ENCODE measurements at regions of chr15 and their contacts with region 1.

Region 1: GRCh38 chr15:49235446-49236124 is 65.5 kb downstream of the GALK2 start:
- DNase-seq: peak; percentile 48
- ATAC-seq: peak; percentile 82
- H3K4me3 ChIP-seq: no peak overlapping the region
- H3K27ac ChIP-seq: no peak overlapping the region
- H3K4me1 ChIP-seq: no peaks in the 10 kb centered on the region
- H3K27me3 ChIP-seq: no peaks in the 10 kb centered on the region
- CTCF ChIP-seq: peak; percentile 46 to 79 (median 69); a peak in 5 of 6 replicates
- POLR2A ChIP-seq: no peak
- RAD21 ChIP-seq: peak; percentile 76

Region 2: GRCh38 chr15:49421991-49422390 is 186.4 kb after region 1 on chr15:
- CTCF ChIA-PET with region 1: interaction called, 37 read pairs
- POLR2A ChIA-PET with region 1: no interaction called
- RAD21 ChIA-PET with region 1: no interaction called
- intact Hi-C with region 1: loop called (anchors 2 kb)
- DNase-seq: peak; percentile 54
- ATAC-seq: peak; percentile 65
- H3K4me3 ChIP-seq: no peak overlapping the region
- H3K27ac ChIP-seq: no peak overlapping the region
- H3K4me1 ChIP-seq: no peaks in the 10 kb centered on the region
- H3K27me3 ChIP-seq: no peaks in the 10 kb centered on the region
- CTCF ChIP-seq: peak; percentile 68 to 77 (median 70)
- POLR2A ChIP-seq: no peak
- RAD21 ChIP-seq: peak; percentile 68

Region 3: GRCh38 chr15:49832511-49832910 is 596.9 kb after region 1 on chr15:
- CTCF ChIA-PET with region 1: interaction called, 8 read pairs
- POLR2A ChIA-PET with region 1: no interaction called
- RAD21 ChIA-PET with region 1: no interaction called
- intact Hi-C with region 1: loop called (anchors 2 kb)
- DNase-seq: no peak
- ATAC-seq: peak; percentile 94
- H3K4me3 ChIP-seq: no peak overlapping the region
- H3K27ac ChIP-seq: no peak overlapping the region
- H3K4me1 ChIP-seq: no peaks in the 10 kb centered on the region
- H3K27me3 ChIP-seq: no peaks in the 10 kb centered on the region
- CTCF ChIP-seq: peak; percentile 18 to 68 (median 64); a peak in 5 of 6 replicates
- POLR2A ChIP-seq: no peak
- RAD21 ChIP-seq: peak; percentile 55

Region 4: DNA sequence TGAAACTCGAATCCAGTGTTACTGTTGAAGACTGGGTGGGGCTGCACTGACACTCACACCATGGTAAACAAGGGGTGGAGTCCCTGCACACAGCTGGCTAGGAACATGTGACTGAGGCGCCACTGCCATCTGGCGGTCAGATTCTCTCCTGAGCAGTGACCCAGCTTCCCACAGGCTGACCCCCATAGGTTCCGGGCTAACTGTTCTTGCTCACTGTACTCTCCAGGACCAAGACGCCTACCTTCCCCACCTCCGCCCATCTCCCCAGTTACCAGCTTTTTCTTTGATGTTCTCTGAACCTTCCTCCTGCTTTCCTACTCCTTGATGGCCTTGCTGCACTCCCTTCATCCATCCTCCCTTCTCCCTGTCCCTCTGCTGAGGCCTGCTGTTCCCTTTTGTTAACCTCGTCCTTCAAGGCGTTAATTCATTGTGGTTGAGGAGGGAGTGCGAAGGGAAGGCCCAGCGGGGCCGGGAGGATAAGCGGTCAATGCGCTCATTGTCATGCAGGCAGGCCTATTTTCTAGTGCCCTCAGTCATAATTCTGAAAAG is 768.3 kb after region 1 on chr15:
- CTCF ChIA-PET with region 1: interaction called, 19 read pairs
- POLR2A ChIA-PET with region 1: no interaction called
- RAD21 ChIA-PET with region 1: interaction called in 1 of 2 experiments, 3 read pairs
- intact Hi-C with region 1: loop called (anchors 1 kb)
- DNase-seq: peak; percentile 80
- ATAC-seq: peak; percentile 100
- H3K4me3 ChIP-seq: no peak overlapping the region
- H3K27ac ChIP-seq: no peak overlapping the region
- H3K4me1 ChIP-seq: peaks cover 2 to 5% of the 10 kb centered on the region in 2 experiments; a peak in 3 of 4 replicates
- H3K27me3 ChIP-seq: no peaks in the 10 kb centered on the region
- CTCF ChIP-seq: peak; percentile 38 to 89 (median 84); a peak in 5 of 6 replicates
- POLR2A ChIP-seq: no peak
- RAD21 ChIP-seq: peak; percentile 77

Region 5: GRCh38 chr15:50145451-50145872 is 909.9 kb after region 1 on chr15:
- CTCF ChIA-PET with region 1: interaction called, 24 read pairs
- POLR2A ChIA-PET with region 1: no interaction called
- RAD21 ChIA-PET with region 1: interaction called in 1 of 2 experiments, 4 read pairs
- intact Hi-C with region 1: loop called (anchors 1 kb)
- DNase-seq: peak; percentile 71
- ATAC-seq: peak; percentile 81
- H3K4me3 ChIP-seq: no peak overlapping the region
- H3K27ac ChIP-seq: no peak overlapping the region
- H3K4me1 ChIP-seq: peaks cover 2 to 23% of the 10 kb centered on the region in 2 experiments; a peak in 3 of 4 replicates
- H3K27me3 ChIP-seq: no peaks in the 10 kb centered on the region
- CTCF ChIP-seq: peak; percentile 17 to 61 (median 51); a peak in 3 of 6 replicates
- POLR2A ChIP-seq: no peak
- RAD21 ChIP-seq: peak; percentile 75

Measured in HCT116 (cell line).